ENCODE measurements at regions of chr2 and their contacts with region 1.

Region 1: GRCh38 chr2:215435809-215436704 is at the start of gene FN1:
- DNase-seq: peak; percentile 75 to 79
- ATAC-seq: peak; percentile 79 to 84
- H3K4me3 ChIP-seq: peak within 1 kb of the TSS; percentile 63 to 69 (median 64)
- H3K27ac ChIP-seq: peak within 1 kb of the TSS; percentile 73 to 89 (median 79)
- H3K4me1 ChIP-seq: peaks cover 5 to 10% of the 10 kb centered on the region in 2 donors
- H3K27me3 ChIP-seq: peaks cover 10 to 42% (median 17%) of the 10 kb centered on the region in 3 donors
- CTCF ChIP-seq: no peak
- POLR2A ChIP-seq: peak; percentile 26 to 47
- total RNA-seq, gene FN1: 24.8 to 341 (median 58.6) TPM

Region 2: DNA sequence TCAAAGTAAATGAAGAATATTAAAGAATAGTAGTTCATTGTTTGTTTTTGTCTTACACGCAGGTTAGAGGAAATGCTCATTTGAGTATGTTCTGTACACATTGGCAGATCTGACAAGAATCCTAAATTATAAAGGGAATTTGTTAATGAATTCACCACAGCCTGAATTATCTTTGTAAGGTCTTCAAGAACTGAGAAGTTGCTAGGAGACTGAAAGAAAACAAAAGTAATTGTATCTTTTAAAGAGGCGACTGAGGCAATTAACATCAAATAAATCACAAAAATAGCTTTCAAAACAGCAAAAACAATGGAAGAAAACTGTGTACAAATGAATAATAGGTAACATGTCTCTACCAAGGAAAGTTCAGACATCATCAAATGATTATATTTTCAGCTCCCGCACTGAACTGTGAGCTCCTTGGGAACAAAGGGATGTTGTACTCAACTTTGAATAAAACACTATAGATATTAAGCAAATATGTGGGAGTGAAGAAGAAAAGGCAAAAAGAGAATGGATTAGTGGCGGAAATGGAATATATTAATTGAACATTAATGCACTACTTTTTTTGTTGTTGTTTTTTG is 175.9 kb before region 1 on chr2:
- in situ Hi-C with region 1: no loop called
- intact Hi-C with region 1: no loop called
- DNase-seq: no peak
- ATAC-seq: no peak
- H3K4me3 ChIP-seq: no peak overlapping the region
- H3K27ac ChIP-seq: no peak overlapping the region
- H3K4me1 ChIP-seq: no peaks in the 10 kb centered on the region
- H3K27me3 ChIP-seq: no peaks in the 10 kb centered on the region
- CTCF ChIP-seq: no peak
- POLR2A ChIP-seq: no peak

Region 3: DNA sequence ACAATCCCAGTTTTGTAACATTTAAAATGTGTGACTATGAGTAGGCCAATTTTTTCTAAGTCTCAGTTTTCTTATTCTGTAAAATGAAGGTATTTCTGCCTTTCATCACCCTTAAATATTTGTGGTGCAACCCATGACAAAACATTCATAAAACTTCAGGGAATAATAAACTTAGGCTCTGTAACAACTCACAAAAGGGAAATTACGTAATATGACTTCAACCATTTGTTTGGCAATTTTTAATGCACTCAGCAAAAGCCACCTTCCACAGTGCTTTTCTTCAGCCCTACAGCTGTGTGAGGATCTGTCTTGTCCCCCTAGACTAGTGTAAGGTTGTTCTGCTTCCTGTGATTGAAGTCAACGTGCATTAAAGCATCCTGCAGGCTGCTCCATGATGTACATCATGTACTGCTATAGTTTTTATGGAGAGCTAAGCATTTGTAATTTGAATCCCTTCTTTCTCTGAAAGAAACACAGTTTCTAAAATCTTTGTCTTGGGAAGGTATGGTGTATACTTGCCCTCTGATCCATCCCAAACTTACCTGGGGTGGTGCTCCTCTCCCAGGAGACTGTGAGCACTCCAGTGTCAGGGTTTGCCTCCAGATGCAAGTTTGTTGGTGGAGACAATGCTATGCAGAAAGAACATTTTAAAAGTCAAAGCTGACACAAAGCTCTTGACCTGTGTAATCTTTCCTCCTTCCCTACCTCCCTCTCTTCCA is 39.3 kb before region 1 on chr2:
- in situ Hi-C with region 1: no loop called
- intact Hi-C with region 1: loop called (anchors 5 kb)
- DNase-seq: no peak
- ATAC-seq: peak; percentile 65 to 84
- H3K4me3 ChIP-seq: no peak overlapping the region
- H3K27ac ChIP-seq: peak overlapping the region in 1 of 4 donors; percentile 28
- H3K4me1 ChIP-seq: no peaks in the 10 kb centered on the region
- H3K27me3 ChIP-seq: no peaks in the 10 kb centered on the region
- CTCF ChIP-seq: no peak
- POLR2A ChIP-seq: no peak